ENCODE measurements at regions of chr12 and their contacts with region 1.

Region 1: DNA sequence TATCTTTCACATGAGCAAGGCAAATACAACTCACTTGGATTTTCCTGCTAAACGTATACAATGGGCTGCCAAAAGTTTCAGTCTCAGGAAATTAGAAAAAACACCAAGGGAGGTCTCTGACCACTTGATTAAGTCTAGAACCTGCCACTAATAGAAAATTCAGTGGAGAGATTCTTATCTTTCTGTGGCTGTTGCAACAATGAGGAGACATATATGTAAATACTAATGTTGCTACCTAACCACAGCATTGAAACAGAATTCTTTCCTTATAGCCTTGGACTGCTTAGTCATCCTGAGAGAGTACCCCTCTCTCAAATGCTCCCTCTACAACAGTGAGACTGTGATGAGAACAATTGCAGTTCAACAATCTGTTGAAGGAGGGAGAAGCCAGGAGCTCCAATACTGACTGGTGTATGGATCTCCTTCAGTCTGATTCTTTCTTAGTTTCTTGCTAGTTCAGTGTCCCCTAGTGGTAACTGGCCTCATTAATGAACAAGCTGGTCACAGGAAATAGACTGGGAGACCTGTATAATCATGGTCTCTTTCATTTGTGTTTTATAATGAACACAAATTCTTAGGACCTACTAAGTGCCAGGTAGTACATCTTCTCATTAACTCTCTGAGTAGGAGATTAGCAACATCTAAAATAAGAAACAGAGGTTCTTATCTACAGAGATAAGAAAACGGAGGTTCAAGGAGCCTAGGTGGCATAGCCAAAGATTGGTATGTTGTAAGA is 164.5 kb downstream of the SLC38A4 start:
- DNase-seq: peak; percentile 94
- H3K4me3 ChIP-seq: no peak overlapping the region
- H3K27ac ChIP-seq: peak overlapping the region; percentile 83
- H3K4me1 ChIP-seq: peaks cover 59% of the 10 kb centered on the region
- H3K27me3 ChIP-seq: no peaks in the 10 kb centered on the region
- CTCF ChIP-seq: peak; percentile 57 to 69
- POLR2A ChIP-seq: peak; percentile 32

Region 2: GRCh38 chr12:45990468-45991283 is 670.6 kb before region 1 on chr12 and contains the start of gene SCAF11:
- CTCF ChIA-PET with region 1: no interaction called
- POLR2A ChIA-PET with region 1: no interaction called
- dilution Hi-C with region 1: no loop called
- intact Hi-C with region 1: loop called (anchors 2 kb)
- DNase-seq: peak; percentile 100
- H3K4me3 ChIP-seq: peak within 1 kb of the TSS; percentile 56 to 91 (median 86)
- H3K27ac ChIP-seq: peak within 1 kb of the TSS; percentile 79
- H3K4me1 ChIP-seq: peaks cover 16% of the 10 kb centered on the region
- H3K27me3 ChIP-seq: no peaks in the 10 kb centered on the region
- CTCF ChIP-seq: peak; percentile 96 to 99
- POLR2A ChIP-seq: peak; percentile 16
- total RNA-seq, gene SCAF11: 95.0 and 109 TPM in 2 replicates

Region 3: DNA sequence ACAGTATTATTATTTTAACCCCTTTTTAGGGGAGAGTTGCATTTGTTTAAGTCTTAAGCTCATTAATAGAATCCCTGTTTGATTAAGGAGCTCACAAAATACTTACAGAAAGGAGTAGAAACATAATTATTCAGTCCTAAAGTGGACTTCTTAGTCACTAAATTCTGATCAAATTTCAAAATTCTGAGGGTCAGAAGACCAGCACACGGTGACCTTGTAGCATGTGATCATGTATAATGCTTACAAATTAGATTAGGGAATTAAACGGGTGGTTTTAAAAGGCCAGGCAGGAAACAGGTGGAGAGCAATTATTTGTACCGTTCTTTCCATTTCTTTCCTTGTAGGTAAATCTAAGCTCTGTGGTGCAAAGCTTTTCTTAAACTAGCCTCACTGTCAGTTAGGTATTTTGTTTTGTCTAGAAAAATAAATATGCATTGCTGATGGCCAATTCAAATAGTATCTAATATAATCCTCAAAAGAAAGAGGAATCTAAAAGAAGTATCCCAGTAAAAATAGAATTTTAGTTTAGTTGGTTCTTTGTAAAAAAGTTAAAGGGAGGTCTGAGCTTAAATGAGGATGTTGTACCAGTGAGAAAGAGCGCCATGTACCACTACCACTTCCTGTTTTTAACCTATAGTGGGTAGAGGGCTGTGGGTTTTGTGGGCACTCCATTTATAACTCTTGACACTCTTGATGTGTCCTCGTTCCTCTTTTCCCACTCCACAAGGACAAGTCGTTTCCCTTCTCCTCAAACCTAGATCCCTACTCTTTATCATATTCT is 443.5 kb before region 1 on chr12:
- CTCF ChIA-PET with region 1: no interaction called
- POLR2A ChIA-PET with region 1: no interaction called
- dilution Hi-C with region 1: no loop called
- intact Hi-C with region 1: no loop called
- DNase-seq: no peak
- H3K4me3 ChIP-seq: no peak overlapping the region
- H3K27ac ChIP-seq: no peak overlapping the region
- H3K4me1 ChIP-seq: peaks cover 39% of the 10 kb centered on the region
- H3K27me3 ChIP-seq: no peaks in the 10 kb centered on the region
- CTCF ChIP-seq: no peak
- POLR2A ChIP-seq: no peak

Region 4: GRCh38 chr12:46342562-46343033 is 318.7 kb before region 1 on chr12:
- CTCF ChIA-PET with region 1: no interaction called
- POLR2A ChIA-PET with region 1: no interaction called
- dilution Hi-C with region 1: no loop called
- intact Hi-C with region 1: loop called (anchors 1 kb)
- DNase-seq: peak; percentile 66
- H3K4me3 ChIP-seq: no peak overlapping the region
- H3K27ac ChIP-seq: no peak overlapping the region
- H3K4me1 ChIP-seq: no peaks in the 10 kb centered on the region
- H3K27me3 ChIP-seq: no peaks in the 10 kb centered on the region
- CTCF ChIP-seq: peak; percentile 49
- POLR2A ChIP-seq: no peak

Region 5: DNA sequence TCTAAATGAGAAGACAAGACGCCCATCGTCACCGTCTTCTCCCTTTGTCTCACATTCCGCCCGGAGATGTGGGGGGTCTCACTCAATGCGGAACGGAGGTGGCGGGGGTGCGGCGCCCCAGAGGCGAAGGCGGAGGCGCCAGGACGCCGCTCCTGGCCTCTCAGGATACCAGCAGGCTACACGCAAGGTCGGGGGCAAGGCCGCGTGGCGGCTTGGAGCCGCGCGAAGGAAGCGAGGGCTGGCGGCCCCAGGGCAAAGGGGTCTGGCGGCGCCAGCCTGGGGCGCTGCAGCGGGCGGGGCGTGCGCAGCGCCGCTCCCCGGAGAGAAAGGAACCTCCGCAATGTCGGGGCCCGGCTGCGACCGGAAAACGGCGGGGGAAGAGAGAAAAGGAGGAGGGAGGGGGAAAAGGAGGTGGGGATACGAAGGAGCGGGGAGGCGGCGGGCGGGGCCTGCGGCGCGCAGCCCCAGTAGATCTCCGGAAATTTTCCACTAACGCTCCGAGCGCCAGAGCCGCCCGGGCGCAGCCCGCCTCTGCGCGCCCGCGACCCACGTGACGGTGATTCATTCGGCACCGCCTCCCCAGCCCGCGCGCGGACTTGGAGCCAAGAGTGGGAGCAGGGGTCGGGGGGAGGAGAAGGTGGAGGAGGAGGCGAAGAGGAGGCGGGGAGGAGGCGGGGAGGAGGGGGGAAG is 278.2 kb before region 1 on chr12:
- CTCF ChIA-PET with region 1: interaction called, 14 read pairs
- POLR2A ChIA-PET with region 1: interaction called, 5 read pairs
- dilution Hi-C with region 1: no loop called
- intact Hi-C with region 1: loop called (anchors 1 kb)
- DNase-seq: peak; percentile 97
- H3K4me3 ChIP-seq: peak overlapping the region; percentile 39 to 68 (median 44)
- H3K27ac ChIP-seq: peak overlapping the region; percentile 98
- H3K4me1 ChIP-seq: peaks cover 44% of the 10 kb centered on the region
- H3K27me3 ChIP-seq: no peaks in the 10 kb centered on the region
- CTCF ChIP-seq: peak in 1 of 2 donors; percentile 14
- POLR2A ChIP-seq: peak; percentile 76

Region 6: GRCh38 chr12:46473634-46474329 is 187.5 kb before region 1 on chr12:
- CTCF ChIA-PET with region 1: interaction called, 13 read pairs
- POLR2A ChIA-PET with region 1: no interaction called
- dilution Hi-C with region 1: no loop called
- intact Hi-C with region 1: loop called (anchors 1 kb)
- DNase-seq: peak; percentile 98
- H3K4me3 ChIP-seq: peak overlapping the region in 1 of 3 experiments; percentile 29
- H3K27ac ChIP-seq: peak overlapping the region; percentile 94
- H3K4me1 ChIP-seq: peaks cover 56% of the 10 kb centered on the region
- H3K27me3 ChIP-seq: no peaks in the 10 kb centered on the region
- CTCF ChIP-seq: no peak
- POLR2A ChIP-seq: peak; percentile 19

Region 7: GRCh38 chr12:46523863-46524770 is 137.2 kb before region 1 on chr12:
- CTCF ChIA-PET with region 1: interaction called, 27 read pairs
- POLR2A ChIA-PET with region 1: no interaction called
- dilution Hi-C with region 1: no loop called
- intact Hi-C with region 1: loop called (anchors 1 kb)
- DNase-seq: peak; percentile 83
- H3K4me3 ChIP-seq: peak overlapping the region in 1 of 3 experiments; percentile 34
- H3K27ac ChIP-seq: peak overlapping the region; percentile 81
- H3K4me1 ChIP-seq: peaks cover 33% of the 10 kb centered on the region
- H3K27me3 ChIP-seq: no peaks in the 10 kb centered on the region
- CTCF ChIP-seq: no peak
- POLR2A ChIP-seq: no peak

Region 8: GRCh38 chr12:46635818-46636217 is 25.5 kb before region 1 on chr12:
- CTCF ChIA-PET with region 1: no interaction called
- POLR2A ChIA-PET with region 1: no interaction called
- dilution Hi-C with region 1: no loop called
- intact Hi-C with region 1: no loop called
- DNase-seq: no peak
- H3K4me3 ChIP-seq: no peak overlapping the region
- H3K27ac ChIP-seq: no peak overlapping the region
- H3K4me1 ChIP-seq: no peaks in the 10 kb centered on the region
- H3K27me3 ChIP-seq: no peaks in the 10 kb centered on the region
- CTCF ChIP-seq: no peak
- POLR2A ChIP-seq: no peak

Region 9: DNA sequence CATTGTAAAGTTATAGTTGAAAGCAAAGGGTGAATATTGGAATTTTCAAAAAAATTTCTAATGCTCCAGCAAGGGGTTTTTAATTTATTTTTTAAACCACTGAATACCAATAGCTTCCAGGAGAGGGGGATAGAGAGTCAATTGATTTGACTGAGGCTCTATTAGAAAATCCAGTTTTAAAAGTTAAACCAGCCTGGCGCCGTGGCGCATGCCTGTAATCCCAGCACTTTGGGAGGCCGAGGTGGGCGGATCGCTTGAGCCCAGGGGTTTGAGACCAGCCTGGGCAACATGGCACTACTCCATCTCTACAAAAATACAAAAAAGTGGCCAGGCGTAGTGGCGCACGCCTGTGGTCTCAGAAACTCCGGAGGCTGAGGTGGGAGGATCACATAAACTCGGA is 14.5 kb after region 1 on chr12:
- CTCF ChIA-PET with region 1: interaction called, 17 read pairs
- POLR2A ChIA-PET with region 1: no interaction called
- dilution Hi-C with region 1: no loop called
- intact Hi-C with region 1: no loop called
- DNase-seq: peak; percentile 54
- H3K4me3 ChIP-seq: no peak overlapping the region
- H3K27ac ChIP-seq: no peak overlapping the region
- H3K4me1 ChIP-seq: no peaks in the 10 kb centered on the region
- H3K27me3 ChIP-seq: no peaks in the 10 kb centered on the region
- CTCF ChIP-seq: peak; percentile 36 to 44
- POLR2A ChIP-seq: no peak

Measured in endothelial cell of umbilical vein (primary cell).